Prostate gland (tissue), 2 donors: ENCODE measurements at regions of chr12 and their contacts with region 1.

Region 1: GRCh38 chr12:67716817-67717216 is 68.3 kb downstream of the DYRK2 start:
- DNase-seq: no peak
- H3K4me3 ChIP-seq: no peak overlapping the region
- H3K27ac ChIP-seq: no peak overlapping the region
- H3K4me1 ChIP-seq: no peaks in the 10 kb centered on the region
- H3K27me3 ChIP-seq: no peaks in the 10 kb centered on the region
- CTCF ChIP-seq: no peak
- POLR2A ChIP-seq: no peak

Region 2: GRCh38 chr12:67804168-67804567 is 87.4 kb after region 1 on chr12:
- intact Hi-C with region 1: loop called (anchors 5 kb)
- DNase-seq: no peak
- H3K4me3 ChIP-seq: no peak overlapping the region
- H3K27ac ChIP-seq: no peak overlapping the region
- H3K4me1 ChIP-seq: no peaks in the 10 kb centered on the region
- H3K27me3 ChIP-seq: no peaks in the 10 kb centered on the region
- CTCF ChIP-seq: no peak
- POLR2A ChIP-seq: no peak

Region 3: DNA sequence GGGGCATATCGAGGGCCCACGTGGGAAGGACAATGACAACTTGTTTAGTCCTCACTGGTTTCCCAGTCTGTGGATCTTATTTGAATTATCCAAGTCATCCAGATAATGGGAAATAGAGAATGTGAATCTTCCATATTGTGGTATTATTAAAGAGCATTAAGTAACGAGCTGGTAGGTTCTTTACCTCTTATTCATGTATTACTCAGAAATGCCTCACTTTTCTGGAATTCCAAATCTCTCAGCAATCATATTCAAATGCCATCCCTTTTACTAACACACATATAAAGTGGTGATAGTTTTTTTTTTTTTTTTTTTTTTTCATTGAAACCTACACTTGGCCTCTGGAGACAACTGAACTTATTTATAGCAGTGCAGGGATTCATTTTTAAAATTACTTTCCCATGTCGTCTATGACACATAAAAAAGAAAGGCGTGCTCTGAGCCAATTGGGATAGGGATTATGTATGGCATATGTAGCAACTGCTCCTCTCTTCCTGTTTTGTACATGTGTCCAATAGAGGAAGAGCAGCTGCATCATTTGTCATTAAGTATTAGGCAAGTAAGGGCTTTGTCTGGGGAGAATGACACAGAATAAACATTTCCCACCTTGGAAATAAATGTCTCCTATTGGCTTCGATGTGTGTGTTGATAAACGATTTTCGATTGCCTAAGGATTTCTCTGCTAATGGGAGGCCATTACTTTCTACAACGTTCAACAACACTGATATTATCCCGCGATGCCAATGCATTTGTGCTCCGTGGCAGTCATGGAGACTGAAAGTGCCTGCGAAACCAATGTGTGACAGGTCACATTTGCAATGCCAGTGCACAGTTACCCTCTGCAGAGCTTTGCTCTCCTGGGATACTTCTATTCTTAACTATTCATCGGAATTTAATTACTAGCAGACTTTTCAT is 193.8 kb after region 1 on chr12:
- intact Hi-C with region 1: no loop called
- DNase-seq: no peak
- H3K4me3 ChIP-seq: no peak overlapping the region
- H3K27ac ChIP-seq: no peak overlapping the region
- H3K4me1 ChIP-seq: no peaks in the 10 kb centered on the region
- H3K27me3 ChIP-seq: no peaks in the 10 kb centered on the region
- CTCF ChIP-seq: no peak
- POLR2A ChIP-seq: no peak